ENCODE measurements at regions of chr3 and their contacts with region 1.

Region 1: GRCh38 chr3:153768561-153769469 is 352.4 kb upstream of the ARHGEF26 start:
- DNase-seq: peak in 1 of 2 donors; percentile 22
- ATAC-seq: peak; percentile 57 to 89 (median 81)
- H3K4me3 ChIP-seq: no peak overlapping the region
- H3K27ac ChIP-seq: no peak overlapping the region
- H3K4me1 ChIP-seq: no peaks in the 10 kb centered on the region
- H3K27me3 ChIP-seq: no peaks in the 10 kb centered on the region
- CTCF ChIP-seq: peak; percentile 66 to 85 (median 79)

Region 2: DNA sequence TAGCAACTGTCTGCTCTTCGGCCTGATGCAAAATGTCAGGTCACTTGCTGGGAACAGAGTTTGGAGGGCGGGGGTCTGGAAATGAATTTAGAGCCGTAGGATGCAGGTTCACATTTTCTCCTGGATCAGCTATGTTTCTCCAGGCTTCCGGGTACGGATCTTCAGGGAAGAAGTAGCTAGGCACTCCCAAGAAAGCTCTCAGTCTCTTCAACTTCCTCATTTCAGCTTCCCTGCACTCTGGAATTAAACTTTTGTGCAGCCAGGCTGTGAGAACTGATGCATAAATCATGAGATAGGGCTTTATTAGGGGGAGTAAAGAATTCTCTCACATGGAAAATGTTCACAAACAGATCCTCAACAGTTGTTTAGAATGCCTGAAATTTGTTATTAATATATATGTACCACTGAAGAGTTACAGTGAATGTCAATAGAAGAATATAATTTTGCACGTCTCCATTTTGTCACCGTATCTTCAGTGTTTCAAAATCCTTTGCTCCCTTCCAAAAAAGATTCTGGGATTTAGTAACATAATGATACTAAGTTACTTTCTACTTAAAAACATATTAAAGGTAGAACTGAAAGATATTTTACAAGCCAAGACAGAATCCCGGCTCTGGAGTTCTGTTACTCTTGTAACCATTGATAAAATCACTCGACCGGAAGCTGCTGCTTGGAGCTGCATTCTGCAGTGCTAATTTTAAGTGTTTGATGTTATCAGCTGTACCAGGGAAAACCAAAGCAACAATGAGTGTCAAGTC is 1112.4 kb before region 1 on chr3:
- intact Hi-C with region 1: loop called in 1 of 10 experiments (anchors 10 kb)
- DNase-seq: no peak
- ATAC-seq: peak in 5 of 8 donors; percentile 28 to 79 (median 67)
- H3K4me3 ChIP-seq: peak overlapping the region in 3 of 10 donors; percentile 10 to 17 (median 15)
- H3K27ac ChIP-seq: peak overlapping the region in 4 of 10 donors; percentile 5 to 55 (median 14)
- H3K4me1 ChIP-seq: peaks cover 0 to 22% (median 13%) of the 10 kb centered on the region in 9 donors
- H3K27me3 ChIP-seq: no peaks in the 10 kb centered on the region
- CTCF ChIP-seq: no peak

Region 3: DNA sequence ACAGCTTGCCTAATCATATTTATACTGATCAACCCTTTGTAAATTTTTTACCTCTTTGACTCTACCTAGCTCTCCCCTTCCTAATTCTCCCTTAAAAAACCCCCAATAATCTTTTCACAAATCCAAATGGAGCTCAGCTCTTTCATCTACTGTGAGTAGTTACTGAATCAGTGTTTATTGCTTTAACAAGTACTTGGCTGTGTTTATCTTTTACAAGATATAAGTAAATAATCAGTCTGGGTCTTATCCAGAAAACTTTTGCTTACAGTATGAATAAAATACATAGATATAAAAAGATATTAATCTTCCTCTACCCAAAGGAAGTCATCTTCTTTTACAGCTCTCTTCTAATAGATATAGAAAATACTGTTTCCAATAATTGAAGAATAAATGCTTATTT is 240.3 kb before region 1 on chr3:
- intact Hi-C with region 1: no loop called
- DNase-seq: no peak
- ATAC-seq: no peak
- H3K4me3 ChIP-seq: no peak overlapping the region
- H3K27ac ChIP-seq: no peak overlapping the region
- H3K4me1 ChIP-seq: no peaks in the 10 kb centered on the region
- H3K27me3 ChIP-seq: no peaks in the 10 kb centered on the region
- CTCF ChIP-seq: no peak

Measured in heart right ventricle (tissue), 16 donors.